ENCODE measurements at regions of chr17 and their contacts with region 1.

Region 1: DNA sequence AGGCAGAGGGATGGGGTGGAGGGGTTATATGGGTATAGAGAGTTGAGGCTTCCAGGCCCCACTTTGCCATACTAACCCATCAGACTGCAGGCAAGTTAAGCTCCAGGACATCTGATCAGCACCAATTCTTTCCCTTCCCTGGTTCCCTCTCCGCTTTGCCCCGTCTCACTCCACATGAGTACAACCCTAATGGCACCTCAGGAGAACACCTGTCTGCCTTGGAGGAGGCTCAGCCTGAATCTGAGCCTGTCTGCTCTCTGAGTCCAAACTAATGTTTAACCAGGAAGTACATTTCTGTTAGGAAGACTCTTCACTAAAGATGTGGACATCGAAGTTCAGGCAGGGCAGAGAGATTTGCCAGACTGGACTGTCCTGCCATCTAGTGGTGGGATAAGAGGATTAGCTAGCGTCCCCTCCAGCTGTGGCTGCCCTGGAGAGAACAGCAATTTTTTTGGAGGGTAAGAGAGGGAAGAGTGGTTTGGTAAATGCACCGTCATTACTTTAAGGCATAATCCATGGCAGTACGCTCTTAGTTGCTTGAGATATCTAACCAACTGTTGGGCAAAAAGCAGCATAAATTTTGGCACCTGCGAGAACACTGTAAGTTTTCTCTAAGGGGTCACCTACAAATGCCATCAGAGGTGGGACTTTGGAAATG is 29.2 kb upstream of the LRRC75A start:
- DNase-seq: peak; percentile 57
- ATAC-seq: peak; percentile 97

Region 2: GRCh38 chr17:16442141-16442540 is 79.1 kb before region 1 on chr17:
- intact Hi-C with region 1: no loop called
- DNase-seq: no peak
- ATAC-seq: no peak

Region 3: GRCh38 chr17:16453493-16453851 is 67.7 kb before region 1 on chr17:
- intact Hi-C with region 1: loop called (anchors 2 kb)
- DNase-seq: no peak
- ATAC-seq: no peak

Region 4: GRCh38 chr17:16477255-16477654 is 43.9 kb before region 1 on chr17:
- intact Hi-C with region 1: no loop called
- DNase-seq: no peak
- ATAC-seq: peak; percentile 92

Region 5: GRCh38 chr17:16568541-16569357 is 47.5 kb after region 1 on chr17 and contains the start of gene ZNF287:
- intact Hi-C with region 1: no loop called
- DNase-seq: peak; percentile 97
- ATAC-seq: peak; percentile 100
- total RNA-seq, gene ZNF287: 8.1 TPM

Region 6: DNA sequence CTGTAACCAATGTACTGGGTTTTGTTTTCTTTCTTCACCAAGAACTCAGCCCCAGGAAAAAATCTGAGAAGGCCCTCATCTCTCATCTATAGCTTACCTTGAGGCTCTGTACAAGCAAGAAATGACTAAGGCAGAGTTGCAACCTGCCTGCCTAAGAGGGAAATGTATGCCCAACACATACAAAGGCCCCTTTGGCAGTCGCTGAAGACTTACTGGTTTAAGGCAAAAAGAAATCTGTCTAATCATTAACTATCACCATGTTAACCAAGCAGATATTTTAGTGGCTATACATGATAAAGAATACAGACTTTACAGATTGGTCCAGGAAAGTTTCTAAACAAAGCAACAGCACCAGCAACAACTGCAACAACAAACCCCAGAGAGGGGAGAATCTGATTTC is 118.2 kb after region 1 on chr17:
- intact Hi-C with region 1: no loop called
- DNase-seq: no peak
- ATAC-seq: no peak

Measured in Right ventricle myocardium superior (tissue), 1 donor.